A549 (cell line): ENCODE measurements at regions of chr16 and their contacts with region 1.

Region 1: GRCh38 chr16:84738255-84739038 is 38.6 kb downstream of the USP10 start:
- DNase-seq: peak; percentile 84 to 86
- ATAC-seq: peak; percentile 91
- H3K4me3 ChIP-seq: no peak overlapping the region
- H3K27ac ChIP-seq: no peak overlapping the region; a peak in 1 of 6 replicates
- H3K4me1 ChIP-seq: peaks cover 79% of the 10 kb centered on the region
- CTCF ChIP-seq: peak; percentile 95
- EP300 ChIP-seq: no peak
- POLR2A ChIP-seq: no peak
- RAD21 ChIP-seq: peak; percentile 69 to 70

Region 2: DNA sequence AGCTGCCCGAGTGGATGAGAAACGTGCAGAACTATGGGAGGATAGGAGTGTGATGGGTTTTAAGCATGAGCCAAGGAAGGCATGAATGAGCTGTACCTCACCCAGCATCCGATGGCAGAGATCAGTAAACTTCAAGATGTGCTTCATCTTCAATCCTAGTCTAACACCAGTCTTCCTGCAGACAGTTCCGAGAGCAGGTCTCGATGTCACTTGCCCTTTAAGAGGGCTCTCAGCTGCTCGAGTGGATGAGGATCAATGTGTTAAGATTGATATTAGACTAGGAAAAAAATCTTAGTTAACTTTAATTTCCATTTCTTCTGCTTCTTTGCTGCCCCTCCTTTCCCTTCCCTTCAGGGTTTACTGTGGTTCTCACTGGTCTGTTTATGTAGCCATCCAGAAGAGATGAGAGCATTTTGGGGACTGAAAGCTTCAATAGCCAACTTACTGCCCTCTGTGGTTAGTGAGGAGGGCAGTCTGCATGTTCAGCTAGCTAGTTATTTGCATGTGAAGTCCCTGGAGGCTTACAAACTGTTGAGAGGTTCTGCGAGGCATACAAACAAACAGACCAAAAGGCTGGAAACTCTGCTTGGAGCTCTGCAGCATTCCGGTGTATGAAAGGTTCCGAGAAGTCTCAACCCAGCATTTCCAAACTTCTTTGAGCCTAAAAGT is 74.9 kb before region 1 on chr16:
- CTCF ChIA-PET with region 1: interaction called, 18 read pairs
- POLR2A ChIA-PET with region 1: no interaction called
- DNase-seq: no peak
- ATAC-seq: no peak
- H3K4me3 ChIP-seq: no peak overlapping the region
- H3K27ac ChIP-seq: no peak overlapping the region
- H3K4me1 ChIP-seq: no peaks in the 10 kb centered on the region
- CTCF ChIP-seq: no peak
- EP300 ChIP-seq: no peak
- POLR2A ChIP-seq: no peak
- RAD21 ChIP-seq: no peak

Region 3: GRCh38 chr16:84672276-84673202 is 65.9 kb before region 1 on chr16:
- CTCF ChIA-PET with region 1: interaction called, 50 read pairs
- POLR2A ChIA-PET with region 1: no interaction called
- DNase-seq: peak; percentile 68 to 88
- ATAC-seq: peak; percentile 88 to 95
- H3K4me3 ChIP-seq: no peak overlapping the region
- H3K27ac ChIP-seq: no peak overlapping the region
- H3K4me1 ChIP-seq: no peaks in the 10 kb centered on the region
- CTCF ChIP-seq: peak; percentile 89
- EP300 ChIP-seq: no peak
- POLR2A ChIP-seq: no peak
- RAD21 ChIP-seq: peak; percentile 62 to 74

Region 4: DNA sequence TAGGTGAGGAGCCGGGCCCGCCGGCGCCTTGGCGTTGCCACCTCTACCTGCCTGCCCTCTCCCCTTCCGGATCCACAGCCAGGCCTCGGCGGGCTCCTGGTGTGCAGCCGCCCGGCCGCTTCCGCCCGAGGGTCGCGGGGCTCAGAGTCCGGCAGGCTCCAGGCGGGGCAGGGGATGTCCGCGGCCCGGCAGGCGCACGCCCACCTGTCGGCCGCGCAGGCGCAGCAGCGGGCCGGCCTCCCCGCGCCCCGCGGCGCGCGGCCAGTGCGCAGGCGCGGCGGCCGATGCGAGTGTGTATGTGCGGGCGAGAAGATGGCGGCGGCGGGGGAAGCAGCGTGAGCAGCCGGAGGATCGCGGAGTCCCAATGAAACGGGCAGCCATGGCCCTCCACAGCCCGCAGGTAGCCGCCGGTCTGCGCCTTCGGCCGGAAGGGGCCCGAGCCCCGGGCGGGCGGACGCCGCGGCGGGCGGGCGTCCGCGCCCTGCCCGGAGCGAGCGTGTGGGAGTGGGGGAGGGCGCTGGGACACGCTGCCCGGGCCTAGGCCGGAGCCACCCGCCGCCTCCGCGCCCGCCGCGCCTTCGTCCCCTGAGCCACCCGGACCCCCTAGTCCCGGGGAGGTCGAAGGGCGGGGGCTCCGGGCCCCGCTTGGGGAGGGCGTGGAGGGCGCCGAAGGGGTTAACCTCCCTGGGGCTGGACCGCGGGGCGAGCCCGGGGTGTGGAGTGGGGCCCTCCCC is 38.6 kb before region 1 on chr16 and contains the start of gene USP10:
- CTCF ChIA-PET with region 1: interaction called, 10 read pairs
- POLR2A ChIA-PET with region 1: no interaction called
- DNase-seq: peak; percentile 81 to 88
- ATAC-seq: peak; percentile 89 to 95
- H3K4me3 ChIP-seq: peak within 1 kb of the TSS; percentile 100
- H3K27ac ChIP-seq: peak within 1 kb of the TSS; percentile 95 to 99
- H3K4me1 ChIP-seq: peaks cover 30% of the 10 kb centered on the region
- CTCF ChIP-seq: no peak
- EP300 ChIP-seq: no peak
- POLR2A ChIP-seq: peak; percentile 80
- RAD21 ChIP-seq: no peak
- polyA plus RNA-seq, gene USP10: 93.5 and 144 TPM in 2 replicates

Region 5: DNA sequence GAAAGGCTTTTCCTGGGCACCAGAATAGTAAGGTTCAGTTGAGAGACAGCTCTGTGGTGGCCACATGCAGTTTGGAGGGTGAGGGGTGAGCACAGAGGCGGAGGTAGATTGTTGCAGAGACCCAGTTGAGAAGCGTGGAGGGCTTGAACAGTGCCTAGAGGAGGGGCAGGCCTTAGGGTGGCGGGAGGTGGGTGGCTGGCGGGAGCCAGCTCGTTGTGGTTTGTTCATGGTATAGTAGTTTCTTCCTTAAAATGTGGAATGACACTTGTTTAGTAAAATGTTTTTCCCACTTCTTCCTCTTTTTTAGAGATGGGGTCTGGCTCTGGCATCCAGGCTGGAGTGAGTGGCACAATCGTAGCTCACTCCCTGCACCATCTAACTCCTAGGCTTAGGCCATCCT is 24.4 kb before region 1 on chr16:
- CTCF ChIA-PET with region 1: interaction called, 19 read pairs
- POLR2A ChIA-PET with region 1: no interaction called
- DNase-seq: no peak
- ATAC-seq: no peak
- H3K4me3 ChIP-seq: no peak overlapping the region
- H3K27ac ChIP-seq: no peak overlapping the region
- H3K4me1 ChIP-seq: peaks cover 11% of the 10 kb centered on the region
- CTCF ChIP-seq: no peak
- EP300 ChIP-seq: no peak
- POLR2A ChIP-seq: no peak
- RAD21 ChIP-seq: no peak

Region 6: GRCh38 chr16:84720177-84720579 is 18.3 kb before region 1 on chr16:
- CTCF ChIA-PET with region 1: interaction called, 141 read pairs
- POLR2A ChIA-PET with region 1: no interaction called
- DNase-seq: no peak
- ATAC-seq: no peak
- H3K4me3 ChIP-seq: no peak overlapping the region
- H3K27ac ChIP-seq: no peak overlapping the region
- H3K4me1 ChIP-seq: peaks cover 26% of the 10 kb centered on the region
- CTCF ChIP-seq: no peak
- EP300 ChIP-seq: no peak
- POLR2A ChIP-seq: no peak
- RAD21 ChIP-seq: no peak

Region 7: GRCh38 chr16:84754353-84754856 is 16.0 kb after region 1 on chr16:
- CTCF ChIA-PET with region 1: interaction called, 202 read pairs
- POLR2A ChIA-PET with region 1: no interaction called
- DNase-seq: peak; percentile 78 to 86
- ATAC-seq: peak; percentile 88 to 90
- H3K4me3 ChIP-seq: no peak overlapping the region
- H3K27ac ChIP-seq: no peak overlapping the region
- H3K4me1 ChIP-seq: peaks cover 25% of the 10 kb centered on the region
- CTCF ChIP-seq: peak; percentile 89
- EP300 ChIP-seq: no peak
- POLR2A ChIP-seq: no peak
- RAD21 ChIP-seq: peak; percentile 79 to 86